ENCODE measurements at regions of chr1 and their contacts with region 1.

Region 1: GRCh38 chr1:8727809-8728213 is 89.6 kb downstream of the RERE start:
- DNase-seq: no peak
- H3K4me3 ChIP-seq: no peak overlapping the region
- H3K27ac ChIP-seq: no peak overlapping the region
- H3K4me1 ChIP-seq: peaks cover 29% of the 10 kb centered on the region
- CTCF ChIP-seq: no peak

Region 2: GRCh38 chr1:8681911-8682310 is 45.9 kb before region 1 on chr1:
- CTCF ChIA-PET with region 1: no interaction called
- POLR2A ChIA-PET with region 1: no interaction called
- intact Hi-C with region 1: no loop called
- DNase-seq: no peak
- H3K4me3 ChIP-seq: no peak overlapping the region
- H3K27ac ChIP-seq: no peak overlapping the region
- H3K4me1 ChIP-seq: no peaks in the 10 kb centered on the region
- CTCF ChIP-seq: no peak

Region 3: DNA sequence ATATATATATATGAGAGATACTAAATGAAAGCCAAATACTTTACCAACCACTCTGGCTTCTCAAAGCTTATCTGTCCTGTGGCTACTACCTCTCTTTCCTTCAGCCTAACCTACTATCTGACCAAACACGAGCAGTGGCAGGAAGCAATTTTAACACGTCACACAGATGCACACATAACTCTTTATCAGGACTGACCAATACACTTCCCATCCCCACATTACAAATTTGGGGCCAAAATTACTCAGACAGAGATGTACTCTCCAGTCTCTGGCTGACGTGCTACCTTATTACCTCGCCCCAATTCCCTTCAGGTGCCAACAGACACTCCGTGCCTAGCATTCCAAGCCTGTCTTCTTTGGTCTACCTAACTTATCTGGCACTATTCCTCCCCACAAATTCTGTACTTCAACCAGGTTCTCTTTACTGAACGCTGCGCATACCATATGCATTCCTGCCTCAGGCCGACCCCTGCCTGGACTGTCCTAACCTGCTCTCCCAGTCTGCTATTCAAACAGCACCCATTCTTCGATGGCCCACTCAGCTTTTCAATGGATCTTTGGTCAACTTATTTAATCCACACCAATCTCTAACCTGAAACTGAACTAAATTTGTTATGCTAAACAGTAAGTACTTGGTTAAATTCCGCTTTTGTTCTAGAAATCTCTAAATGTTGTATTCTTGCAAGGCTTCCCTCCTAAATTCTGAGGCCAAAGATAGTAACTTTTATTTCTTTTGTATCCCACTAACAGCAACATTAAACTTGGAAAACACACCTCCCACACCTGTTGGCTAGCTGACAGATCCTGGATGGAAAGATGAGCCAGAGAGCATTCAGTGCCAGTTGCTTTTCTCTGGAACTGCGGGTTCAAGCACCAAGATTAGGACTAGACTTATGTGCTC is 61.8 kb after region 1 on chr1:
- CTCF ChIA-PET with region 1: no interaction called
- POLR2A ChIA-PET with region 1: no interaction called
- intact Hi-C with region 1: no loop called
- DNase-seq: no peak
- H3K4me3 ChIP-seq: no peak overlapping the region
- H3K27ac ChIP-seq: no peak overlapping the region
- H3K4me1 ChIP-seq: peaks cover 19% of the 10 kb centered on the region
- CTCF ChIP-seq: no peak

Region 4: DNA sequence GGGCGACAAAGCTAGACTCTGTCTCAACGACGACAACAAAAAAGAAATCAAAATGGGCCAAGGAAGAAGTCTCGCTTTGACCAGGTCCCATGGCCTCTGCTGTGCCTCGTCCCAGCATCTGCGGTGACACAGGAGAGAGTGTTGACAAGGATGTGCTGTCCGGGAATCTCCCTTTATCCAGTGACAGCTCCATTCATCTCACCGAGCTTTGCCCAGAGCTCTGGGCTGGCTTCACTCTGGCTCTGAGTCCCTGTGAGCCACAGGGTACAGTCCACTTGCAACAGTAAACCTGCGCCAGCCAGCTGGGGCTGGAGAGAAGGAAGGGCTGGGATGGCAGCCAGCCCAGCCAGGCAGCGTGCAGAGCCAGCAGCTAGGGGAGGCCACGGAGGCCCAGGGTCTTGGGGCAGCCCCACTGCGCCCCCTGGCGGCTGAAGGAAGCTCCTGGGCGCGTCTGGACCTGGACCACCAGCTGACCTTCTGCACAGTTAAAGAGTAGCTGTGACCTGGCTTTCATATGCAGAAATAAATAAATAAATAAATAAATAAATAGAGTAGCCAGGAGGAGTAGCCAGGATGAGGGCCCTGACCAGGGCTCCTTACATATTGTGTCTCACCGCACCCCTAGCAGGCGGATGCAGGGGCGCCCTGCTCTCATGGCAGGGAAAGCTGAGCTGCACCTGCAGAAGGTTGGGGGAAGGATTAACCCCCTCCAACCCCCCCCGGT is 121.0 kb after region 1 on chr1:
- CTCF ChIA-PET with region 1: interaction called, 5 read pairs
- POLR2A ChIA-PET with region 1: no interaction called
- intact Hi-C with region 1: loop called (anchors 1 kb)
- DNase-seq: peak; percentile 82
- H3K4me3 ChIP-seq: no peak overlapping the region
- H3K27ac ChIP-seq: no peak overlapping the region
- H3K4me1 ChIP-seq: peaks cover 9% of the 10 kb centered on the region
- CTCF ChIP-seq: peak; percentile 88

Region 5: GRCh38 chr1:9315411-9316079 is 587.7 kb after region 1 on chr1:
- CTCF ChIA-PET with region 1: no interaction called
- POLR2A ChIA-PET with region 1: no interaction called
- intact Hi-C with region 1: no loop called
- DNase-seq: no peak
- H3K4me3 ChIP-seq: no peak overlapping the region
- H3K27ac ChIP-seq: no peak overlapping the region
- H3K4me1 ChIP-seq: peaks cover 46% of the 10 kb centered on the region
- CTCF ChIP-seq: no peak